ENCODE measurements at regions of chr20 and their contacts with region 1.

Region 1: DNA sequence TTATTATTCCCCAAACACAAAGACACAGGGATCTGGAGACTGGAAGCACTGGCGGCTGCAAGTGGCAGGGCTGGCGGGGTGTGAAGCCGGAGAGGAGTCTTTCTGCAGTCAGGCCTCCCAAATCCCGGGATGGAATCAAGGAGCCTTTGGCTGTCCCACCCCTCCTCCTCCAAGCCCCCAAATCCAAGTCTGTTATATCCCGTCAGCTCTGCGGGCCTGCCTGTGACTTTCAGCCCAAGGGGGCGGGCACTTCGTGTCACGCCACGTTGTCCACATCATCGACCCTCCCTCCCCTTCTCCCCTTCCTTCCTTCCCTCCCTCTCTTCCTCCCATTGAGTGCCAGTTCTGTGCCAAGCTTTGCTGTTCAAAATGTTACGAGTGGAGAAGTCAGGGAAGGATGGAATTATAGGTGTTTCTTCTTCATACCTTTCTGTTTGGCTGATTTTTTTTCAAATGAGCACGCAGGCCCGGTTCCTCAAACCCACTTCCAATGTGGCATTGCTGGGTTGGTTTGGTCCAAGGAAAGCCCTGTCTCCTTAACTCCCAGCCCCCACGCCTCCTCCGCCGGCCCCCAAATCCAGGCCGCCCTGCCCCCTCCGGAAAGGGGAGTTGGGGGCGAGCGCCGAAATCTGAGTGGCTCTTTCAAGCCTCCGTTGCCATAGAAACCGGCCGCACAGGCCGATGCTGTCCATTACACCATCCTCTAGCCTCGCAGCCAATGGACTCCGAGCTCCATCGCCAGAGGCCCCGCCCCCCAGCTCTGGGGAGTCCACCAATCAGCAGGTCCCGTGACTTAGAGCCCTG is 12.7 kb downstream of the ZCCHC3 start:
- DNase-seq: peak; percentile 99 to 100 (median 100)

Region 2: GRCh38 chr20:324177-325044 is 14.4 kb after region 1 on chr20:
- intact Hi-C with region 1: loop called (anchors 2 kb)
- DNase-seq: peak; percentile 74 to 97 (median 84)

Region 3: DNA sequence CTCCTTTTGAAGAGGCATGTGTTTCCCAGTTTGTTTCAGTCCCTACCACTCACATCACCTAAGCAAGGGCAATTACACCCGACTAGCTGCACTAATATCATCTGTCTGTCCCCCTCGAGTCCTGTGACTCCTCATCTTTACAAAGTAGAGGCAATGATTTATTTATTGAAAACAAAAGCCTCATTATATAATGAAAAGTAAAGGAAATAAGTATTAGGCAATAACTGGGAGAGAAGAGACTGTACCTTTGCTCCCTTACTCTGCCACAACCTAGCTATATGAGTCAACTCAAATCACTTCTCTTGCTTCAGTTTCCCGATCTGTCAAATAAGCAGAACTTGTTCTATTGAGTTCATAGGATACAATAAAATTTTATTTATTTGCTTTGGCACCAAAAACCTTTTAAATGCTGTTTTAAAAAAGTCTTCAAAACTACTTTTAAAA is 194.6 kb after region 1 on chr20:
- intact Hi-C with region 1: no loop called
- DNase-seq: no peak